Upper lobe of right lung (tissue), 1 donor: ENCODE measurements at regions of chr16 and their contacts with region 1.

Region 1: GRCh38 chr16:30761928-30762810 is at the starts of genes CFAP119 and RNF40:
- DNase-seq: peak; percentile 97
- ATAC-seq: peak; percentile 96
- H3K4me3 ChIP-seq: peak within 1 kb of the TSS; percentile 89
- H3K27ac ChIP-seq: peak within 1 kb of the TSS; percentile 90
- H3K4me1 ChIP-seq: peaks cover 25% of the 10 kb centered on the region
- H3K27me3 ChIP-seq: no peaks in the 10 kb centered on the region
- CTCF ChIP-seq: no peak
- total RNA-seq, gene CFAP119: 5.5 TPM
- total RNA-seq, gene RNF40: 93.6 TPM

Region 2: DNA sequence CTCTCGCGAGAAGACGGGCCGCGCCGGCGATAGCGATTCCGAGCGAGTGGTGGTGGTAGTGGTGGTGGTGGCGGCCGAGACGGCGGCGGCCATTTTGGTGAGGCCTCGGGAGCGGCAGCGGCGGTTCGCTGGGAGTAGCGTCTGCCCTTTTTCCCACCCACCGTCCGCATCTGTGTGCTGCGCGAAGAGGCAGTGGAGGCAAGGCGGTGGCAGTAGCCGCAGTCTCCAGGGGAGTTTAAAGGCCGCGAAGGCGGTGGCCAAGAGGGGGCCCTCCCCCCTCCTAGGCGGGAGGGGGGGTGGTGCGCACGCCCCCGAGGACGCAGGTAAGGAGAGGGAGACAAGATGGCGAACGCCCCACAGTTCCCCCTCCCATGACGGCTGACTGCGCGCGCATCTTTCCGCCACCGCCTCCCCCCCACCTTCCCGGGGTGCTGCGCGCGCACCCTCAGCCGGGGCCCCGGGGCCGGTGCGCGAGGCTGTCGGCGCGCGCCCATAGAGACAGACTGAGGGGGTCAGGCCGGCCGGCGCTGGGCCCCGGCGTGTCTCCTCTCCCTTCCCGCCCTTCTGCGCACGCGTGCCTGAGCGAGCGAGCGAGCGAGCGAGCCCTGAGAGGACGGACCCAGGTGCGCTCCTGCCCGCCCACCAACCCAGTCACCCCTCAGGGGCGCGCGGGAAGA is 63.9 kb before region 1 on chr16:
- intact Hi-C with region 1: loop called (anchors 10 kb)
- DNase-seq: peak; percentile 100
- ATAC-seq: peak; percentile 90
- H3K4me3 ChIP-seq: peak overlapping the region; percentile 98
- H3K27ac ChIP-seq: peak overlapping the region; percentile 100
- H3K4me1 ChIP-seq: peaks cover 30% of the 10 kb centered on the region
- H3K27me3 ChIP-seq: no peaks in the 10 kb centered on the region
- CTCF ChIP-seq: no peak

Region 3: DNA sequence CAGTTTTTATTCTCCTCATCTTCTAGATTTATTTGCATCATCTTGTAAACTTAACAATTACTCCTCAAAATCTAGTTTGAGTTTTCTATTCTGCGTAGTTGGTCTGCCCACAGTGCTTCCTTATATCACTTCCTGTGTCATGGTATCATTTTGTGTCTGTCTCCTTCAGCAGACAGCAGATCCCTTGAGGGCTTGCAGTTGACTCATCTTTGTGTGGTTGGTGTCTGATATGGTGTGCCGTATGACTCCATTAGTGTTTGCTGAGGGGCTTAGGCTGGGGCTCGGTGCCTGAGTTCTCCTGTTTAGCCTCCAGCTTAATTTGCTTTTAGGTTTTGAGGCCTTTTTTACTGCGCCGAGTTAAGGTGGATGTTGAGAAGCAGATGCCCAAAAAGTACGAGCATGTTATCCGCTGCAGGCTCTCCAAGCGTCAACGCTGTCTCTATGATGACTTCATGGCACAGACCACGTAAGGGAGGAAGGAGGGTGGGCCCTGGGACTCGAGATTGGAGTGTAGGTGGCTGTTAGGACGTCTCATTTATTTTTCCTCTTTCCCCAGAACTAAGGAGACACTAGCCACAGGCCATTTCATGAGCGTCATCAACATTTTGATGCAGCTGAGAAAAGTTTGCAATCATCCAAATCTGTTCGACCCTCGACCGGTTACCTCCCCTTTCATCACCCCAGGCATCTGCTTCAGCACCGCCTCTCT is 46.3 kb before region 1 on chr16:
- intact Hi-C with region 1: loop called (anchors 10 kb)
- DNase-seq: no peak
- ATAC-seq: peak; percentile 77
- H3K4me3 ChIP-seq: no peak overlapping the region
- H3K27ac ChIP-seq: peak overlapping the region; percentile 45
- H3K4me1 ChIP-seq: peaks cover 3% of the 10 kb centered on the region
- H3K27me3 ChIP-seq: no peaks in the 10 kb centered on the region
- CTCF ChIP-seq: no peak

Region 4: DNA sequence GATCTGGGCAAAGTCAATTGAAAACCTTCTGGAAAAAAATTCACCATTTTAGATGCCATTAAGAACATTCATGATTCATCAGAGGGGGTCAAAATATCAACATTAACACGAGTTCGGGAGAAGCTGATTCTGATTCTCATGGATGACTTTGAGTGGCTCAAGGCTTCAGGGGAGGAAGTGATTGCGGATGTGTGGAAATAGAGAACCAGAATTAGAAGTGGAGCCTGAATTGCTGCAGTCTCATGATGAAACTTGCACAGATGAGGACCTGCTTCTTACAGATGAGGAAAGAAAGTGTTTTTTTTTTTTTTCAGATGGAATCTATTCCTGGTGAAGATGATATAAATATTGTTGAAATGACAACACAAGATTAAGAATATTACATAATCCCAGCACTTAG is 605.7 kb after region 1 on chr16:
- intact Hi-C with region 1: no loop called
- DNase-seq: no peak
- ATAC-seq: peak; percentile 74
- H3K4me3 ChIP-seq: no peak overlapping the region
- H3K27ac ChIP-seq: no peak overlapping the region
- H3K4me1 ChIP-seq: no peaks in the 10 kb centered on the region
- H3K27me3 ChIP-seq: no peaks in the 10 kb centered on the region
- CTCF ChIP-seq: no peak